Ascending aorta (tissue), 2 donors: ENCODE measurements at regions of chr11 and their contacts with region 1.

Region 1: DNA sequence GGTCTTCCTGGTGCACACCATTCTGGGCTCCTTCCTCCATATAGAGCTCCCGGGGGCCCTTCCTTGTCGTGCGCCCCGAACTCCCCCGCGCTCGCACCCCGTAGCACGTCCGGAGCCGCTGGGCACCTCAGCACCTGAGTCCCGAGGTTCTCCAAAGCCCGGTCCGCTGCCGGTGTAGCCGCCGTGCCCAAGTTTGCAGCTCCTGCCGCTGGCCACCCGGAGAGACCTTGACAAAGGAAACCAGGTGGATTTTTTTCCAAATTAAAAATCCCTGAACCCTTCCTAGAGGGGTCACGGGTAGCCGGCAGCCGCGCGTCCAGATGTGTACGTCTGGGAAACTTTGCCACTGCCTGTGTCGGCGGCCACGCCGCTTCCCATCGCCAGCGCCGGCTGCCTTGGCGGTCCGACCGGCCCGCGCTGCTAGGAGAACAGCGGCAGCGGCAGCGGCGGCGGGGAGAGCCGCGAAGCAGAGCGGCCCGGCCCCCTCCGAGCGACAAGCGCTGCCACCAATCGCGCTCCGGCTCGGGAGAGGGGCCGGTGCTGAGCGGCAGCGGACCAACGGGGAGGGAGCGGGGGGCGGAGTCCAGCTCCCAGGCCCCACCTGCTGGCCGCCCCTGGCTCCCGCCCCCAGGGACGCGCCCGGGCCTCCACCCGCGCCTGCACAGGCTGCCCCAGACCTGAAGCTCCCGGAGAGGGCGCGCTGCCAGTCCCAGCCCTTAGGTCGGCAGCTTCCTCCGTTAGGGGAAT is at the start of gene GALNT18:
- DNase-seq: peak; percentile 36 to 94
- H3K4me3 ChIP-seq: peak within 1 kb of the TSS; percentile 62 to 92
- H3K27ac ChIP-seq: peak within 1 kb of the TSS; percentile 63 to 90
- H3K4me1 ChIP-seq: peaks cover 0 to 29% of the 10 kb centered on the region in 2 donors
- H3K27me3 ChIP-seq: no peaks in the 10 kb centered on the region
- CTCF ChIP-seq: peak; percentile 15 to 56 (median 45)
- total RNA-seq, gene GALNT18: 53.5 TPM

Region 2: GRCh38 chr11:10808553-10809372 is 813.0 kb before region 1 on chr11 and contains the start of gene EIF4G2:
- intact Hi-C with region 1: loop called (anchors 10 kb)
- DNase-seq: peak; percentile 97 to 99
- H3K4me3 ChIP-seq: peak within 1 kb of the TSS; percentile 83 to 99
- H3K27ac ChIP-seq: peak within 1 kb of the TSS; percentile 97 to 99
- H3K4me1 ChIP-seq: peaks cover 0 to 39% of the 10 kb centered on the region in 2 donors
- H3K27me3 ChIP-seq: no peaks in the 10 kb centered on the region
- CTCF ChIP-seq: peak in 1 of 3 experiments; percentile 15
- total RNA-seq, gene EIF4G2: 311 TPM

Region 3: DNA sequence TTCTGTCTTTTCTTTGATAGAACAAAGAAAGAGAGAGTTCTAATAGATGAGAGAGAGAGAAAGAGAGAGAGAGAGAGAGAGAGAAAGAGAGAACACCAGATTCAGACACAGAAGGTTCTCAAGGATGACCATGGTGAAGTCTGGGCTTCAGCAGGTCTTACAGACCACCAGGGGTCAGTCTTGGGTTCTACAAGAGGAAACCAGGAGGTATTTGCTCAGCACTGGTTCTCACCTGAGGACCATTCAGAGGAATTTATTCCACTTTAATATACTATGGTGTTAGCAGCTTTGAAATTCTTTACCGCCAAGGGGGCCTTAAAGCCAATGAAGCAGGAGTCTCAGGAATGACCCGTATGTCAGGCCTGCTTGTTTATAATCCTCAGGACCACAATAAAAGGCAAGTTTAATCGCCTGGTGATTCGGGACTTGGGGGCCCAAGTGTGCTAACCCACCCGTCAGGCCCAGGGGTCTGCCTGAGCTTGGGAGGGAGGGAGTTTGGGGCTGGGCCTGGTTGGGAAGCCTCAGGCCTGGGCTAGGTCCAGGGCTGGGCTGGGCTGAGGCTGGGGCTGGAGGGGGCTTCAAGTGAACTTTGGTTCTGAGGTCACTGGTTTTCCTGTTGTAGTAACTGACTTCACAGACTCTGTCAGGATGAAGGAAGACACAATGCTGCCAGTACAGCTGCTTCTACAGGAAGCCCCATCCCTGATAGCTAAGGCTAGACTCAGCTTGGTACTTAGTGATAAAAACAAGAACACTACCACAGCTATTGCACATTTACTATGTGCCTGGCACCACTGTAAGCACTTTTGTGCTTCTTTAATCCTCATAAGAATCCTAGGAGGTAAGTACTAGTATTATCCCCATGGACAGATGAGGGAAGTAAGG is 584.7 kb before region 1 on chr11:
- intact Hi-C with region 1: loop called (anchors 5 kb)
- DNase-seq: no peak
- H3K4me3 ChIP-seq: no peak overlapping the region
- H3K27ac ChIP-seq: peak overlapping the region in 1 of 2 donors; percentile 53
- H3K4me1 ChIP-seq: peaks cover 7 to 18% of the 10 kb centered on the region in 2 donors
- H3K27me3 ChIP-seq: no peaks in the 10 kb centered on the region
- CTCF ChIP-seq: peak; percentile 65 to 76 (median 68)

Region 4: GRCh38 chr11:11391796-11392195 is 229.9 kb before region 1 on chr11:
- intact Hi-C with region 1: loop called (anchors 1 kb)
- DNase-seq: peak in 1 of 2 donors; percentile 81
- H3K4me3 ChIP-seq: peak overlapping the region; percentile 8 to 39
- H3K27ac ChIP-seq: peak overlapping the region; percentile 63 to 71
- H3K4me1 ChIP-seq: peaks cover 0 to 13% of the 10 kb centered on the region in 2 donors
- H3K27me3 ChIP-seq: no peaks in the 10 kb centered on the region
- CTCF ChIP-seq: no peak

Region 5: GRCh38 chr11:11569936-11570491 is 51.7 kb before region 1 on chr11:
- intact Hi-C with region 1: loop called (anchors 1 kb)
- DNase-seq: peak; percentile 64 to 92
- H3K4me3 ChIP-seq: peak overlapping the region in 1 of 2 donors; percentile 47
- H3K27ac ChIP-seq: peak overlapping the region; percentile 72 to 78
- H3K4me1 ChIP-seq: peaks cover 18 to 28% of the 10 kb centered on the region in 2 donors
- H3K27me3 ChIP-seq: no peaks in the 10 kb centered on the region
- CTCF ChIP-seq: peak in 1 of 3 experiments; percentile 16

Region 6: GRCh38 chr11:11691296-11692142 is 69.8 kb after region 1 on chr11:
- intact Hi-C with region 1: no loop called
- DNase-seq: no peak
- H3K4me3 ChIP-seq: no peak overlapping the region
- H3K27ac ChIP-seq: no peak overlapping the region
- H3K4me1 ChIP-seq: no peaks in the 10 kb centered on the region
- H3K27me3 ChIP-seq: no peaks in the 10 kb centered on the region
- CTCF ChIP-seq: no peak